ENCODE measurements at regions of chr11 and their contacts with region 1.

Region 1: DNA sequence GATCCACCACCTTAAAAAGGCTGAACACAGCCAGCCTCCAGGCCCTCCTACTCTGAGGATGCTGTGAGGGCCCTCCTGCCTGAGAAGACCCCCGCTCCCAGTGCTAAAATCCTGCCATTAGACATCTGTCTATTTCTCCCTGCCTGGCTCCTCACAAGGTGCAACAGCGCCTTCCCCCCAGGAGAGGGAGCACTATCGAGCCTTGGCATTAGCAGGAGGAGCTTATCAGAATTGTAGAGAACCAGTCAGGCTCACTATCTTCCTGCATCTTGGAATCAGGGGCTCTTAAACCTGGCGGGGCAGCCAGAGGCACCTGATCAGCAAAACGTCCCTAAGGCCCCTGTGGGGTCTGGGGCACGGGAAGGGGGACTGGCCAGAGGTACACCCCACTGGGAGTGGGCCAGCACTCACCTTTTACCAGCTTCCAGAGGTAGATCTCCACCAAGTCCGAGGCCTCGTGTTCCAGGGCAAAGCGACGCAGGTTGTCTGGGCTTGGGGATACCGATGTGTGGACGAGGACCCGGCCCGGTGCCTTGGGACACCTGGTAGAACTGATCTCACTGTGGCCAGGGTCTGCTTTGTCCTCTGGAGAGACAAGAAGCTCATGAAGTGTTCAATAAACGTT is 28.7 kb downstream of the CHRDL2 start:
- DNase-seq: no peak
- H3K4me3 ChIP-seq: no peak overlapping the region
- H3K27me3 ChIP-seq: no peaks in the 10 kb centered on the region
- CTCF ChIP-seq: peak; percentile 98

Region 2: GRCh38 chr11:74311352-74311926 is 391.1 kb before region 1 on chr11 and contains the start of gene P4HA3:
- CTCF ChIA-PET with region 1: no interaction called
- POLR2A ChIA-PET with region 1: no interaction called
- DNase-seq: no peak
- H3K4me3 ChIP-seq: peak within 1 kb of the TSS; percentile 44
- H3K27me3 ChIP-seq: no peaks in the 10 kb centered on the region
- CTCF ChIP-seq: no peak
- polyA plus RNA-seq, gene P4HA3: 13.5 and 14.1 TPM in 2 replicates

Region 3: GRCh38 chr11:74347381-74347780 is 355.1 kb before region 1 on chr11:
- CTCF ChIA-PET with region 1: no interaction called
- POLR2A ChIA-PET with region 1: no interaction called
- DNase-seq: no peak
- H3K4me3 ChIP-seq: no peak overlapping the region
- H3K27me3 ChIP-seq: no peaks in the 10 kb centered on the region
- CTCF ChIP-seq: no peak

Region 4: GRCh38 chr11:74683279-74683871 is 19.1 kb before region 1 on chr11:
- CTCF ChIA-PET with region 1: interaction called, 15 read pairs
- POLR2A ChIA-PET with region 1: no interaction called
- DNase-seq: no peak
- H3K4me3 ChIP-seq: no peak overlapping the region
- H3K27me3 ChIP-seq: no peaks in the 10 kb centered on the region
- CTCF ChIP-seq: peak; percentile 59

Region 5: GRCh38 chr11:74691755-74692154 is 10.7 kb before region 1 on chr11:
- CTCF ChIA-PET with region 1: interaction called, 15 read pairs
- POLR2A ChIA-PET with region 1: no interaction called
- DNase-seq: no peak
- H3K4me3 ChIP-seq: no peak overlapping the region
- H3K27me3 ChIP-seq: no peaks in the 10 kb centered on the region; the same call in 1 of the 2 replicates
- CTCF ChIP-seq: no peak

Region 6: GRCh38 chr11:74720596-74721478 is 18.3 kb after region 1 on chr11:
- CTCF ChIA-PET with region 1: interaction called, 76 read pairs
- POLR2A ChIA-PET with region 1: no interaction called
- DNase-seq: no peak
- H3K4me3 ChIP-seq: no peak overlapping the region
- H3K27me3 ChIP-seq: peaks cover 15% of the 10 kb centered on the region
- CTCF ChIP-seq: no peak

Region 7: DNA sequence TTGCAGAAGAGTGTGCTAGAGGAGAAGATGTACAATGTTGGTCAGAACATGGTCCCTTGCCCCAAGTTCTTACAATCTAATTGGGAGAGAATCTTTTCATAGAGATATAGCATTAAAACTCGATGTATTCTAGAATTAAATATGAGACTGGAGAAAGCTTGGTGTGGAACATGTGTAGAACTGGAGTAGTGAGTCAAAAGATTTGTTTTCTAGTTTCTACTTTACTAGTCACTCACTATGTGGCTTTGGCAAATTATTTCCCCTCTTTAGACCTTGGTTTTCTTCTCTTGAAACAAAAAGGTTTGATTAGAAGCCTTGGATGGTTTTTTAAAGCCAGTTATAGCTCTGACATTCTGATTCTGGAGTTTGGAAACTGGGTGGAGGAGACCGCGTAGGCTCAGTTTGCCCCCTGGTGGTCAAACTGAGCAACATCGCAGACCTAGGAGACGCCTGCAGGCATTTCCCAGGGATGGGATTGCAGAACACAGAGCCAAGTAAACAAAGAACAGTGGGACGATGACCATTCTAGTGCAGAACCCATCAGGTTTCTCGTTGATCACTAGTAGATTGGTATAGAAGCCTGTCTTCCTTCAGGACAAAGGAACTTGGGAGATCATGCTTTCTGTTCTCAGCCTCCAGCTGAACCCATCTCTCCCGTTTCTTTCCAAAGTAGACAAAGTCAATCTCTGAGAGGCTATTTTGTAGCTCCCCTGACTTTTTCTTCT is 37.2 kb after region 1 on chr11:
- CTCF ChIA-PET with region 1: interaction called, 29 read pairs
- POLR2A ChIA-PET with region 1: no interaction called
- DNase-seq: no peak
- H3K4me3 ChIP-seq: no peak overlapping the region
- H3K27me3 ChIP-seq: peaks cover 9% of the 10 kb centered on the region
- CTCF ChIP-seq: peak; percentile 91

Measured in BJ (cell line).